ENCODE measurements at regions of chr19 and their contacts with region 1.

Region 1: DNA sequence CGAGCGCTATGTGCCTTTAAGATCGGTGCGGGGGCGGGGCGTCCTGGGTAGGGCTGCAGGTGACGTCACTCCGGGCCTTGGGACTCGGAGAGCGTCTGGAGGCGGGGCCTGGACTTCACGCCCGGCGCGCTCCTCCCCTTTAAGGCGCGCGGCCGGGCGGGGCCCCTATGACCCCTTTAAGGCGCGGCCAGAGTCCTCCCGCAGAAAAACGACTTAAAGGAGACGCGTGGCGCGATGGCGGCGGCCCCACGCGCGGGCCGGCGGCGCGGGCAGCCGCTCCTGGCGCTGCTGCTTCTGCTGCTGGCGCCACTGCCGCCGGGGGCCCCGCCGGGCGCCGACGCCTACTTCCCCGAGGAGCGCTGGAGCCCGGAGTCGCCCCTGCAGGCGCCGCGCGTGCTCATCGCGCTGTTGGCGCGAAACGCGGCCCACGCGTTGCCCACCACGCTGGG is at the start of gene COLGALT1:
- DNase-seq: peak; percentile 99
- ATAC-seq: peak; percentile 96 to 98 (median 96)
- H3K4me3 ChIP-seq: peak within 1 kb of the TSS; percentile 71 to 98 (median 88)
- H3K27ac ChIP-seq: peak within 1 kb of the TSS; percentile 68 to 97 (median 86)
- H3K4me1 ChIP-seq: peaks cover 3 to 70% (median 40%) of the 10 kb centered on the region in 12 donors
- H3K27me3 ChIP-seq: no peaks in the 10 kb centered on the region
- CTCF ChIP-seq: no peak
- POLR2A ChIP-seq: peak in 1 of 2 donors; percentile 50
- total RNA-seq, gene COLGALT1: 23.7 to 117 (median 32.6) TPM

Region 2: GRCh38 chr19:17511724-17512573 is 43.6 kb before region 1 on chr19:
- intact Hi-C with region 1: loop called in 3 of 10 experiments (anchors 5 to 10 kb)
- DNase-seq: peak; percentile 92 to 95 (median 94)
- ATAC-seq: peak; percentile 75 to 85 (median 82)
- H3K4me3 ChIP-seq: peak overlapping the region; percentile 69 to 100 (median 88)
- H3K27ac ChIP-seq: peak overlapping the region; percentile 98 to 100 (median 99)
- H3K4me1 ChIP-seq: peaks cover 0 to 42% (median 21%) of the 10 kb centered on the region in 12 donors
- H3K27me3 ChIP-seq: no peaks in the 10 kb centered on the region
- CTCF ChIP-seq: peak in 9 of 12 donors; percentile 6 to 51 (median 17)
- POLR2A ChIP-seq: peak in 1 of 2 donors; percentile 31